HEK293T (cell line): ENCODE measurements at regions of chr22 and their contacts with region 1.

Region 1: GRCh38 chr22:50525390-50526068 is at the start of gene SCO2:
- DNase-seq: peak; percentile 99

Region 2: GRCh38 chr22:50469377-50470305 is 55.9 kb before region 1 on chr22:
- CTCF ChIA-PET with region 1: interaction called, 11 read pairs
- POLR2A ChIA-PET with region 1: interaction called, 6 read pairs
- DNase-seq: no peak

Region 3: DNA sequence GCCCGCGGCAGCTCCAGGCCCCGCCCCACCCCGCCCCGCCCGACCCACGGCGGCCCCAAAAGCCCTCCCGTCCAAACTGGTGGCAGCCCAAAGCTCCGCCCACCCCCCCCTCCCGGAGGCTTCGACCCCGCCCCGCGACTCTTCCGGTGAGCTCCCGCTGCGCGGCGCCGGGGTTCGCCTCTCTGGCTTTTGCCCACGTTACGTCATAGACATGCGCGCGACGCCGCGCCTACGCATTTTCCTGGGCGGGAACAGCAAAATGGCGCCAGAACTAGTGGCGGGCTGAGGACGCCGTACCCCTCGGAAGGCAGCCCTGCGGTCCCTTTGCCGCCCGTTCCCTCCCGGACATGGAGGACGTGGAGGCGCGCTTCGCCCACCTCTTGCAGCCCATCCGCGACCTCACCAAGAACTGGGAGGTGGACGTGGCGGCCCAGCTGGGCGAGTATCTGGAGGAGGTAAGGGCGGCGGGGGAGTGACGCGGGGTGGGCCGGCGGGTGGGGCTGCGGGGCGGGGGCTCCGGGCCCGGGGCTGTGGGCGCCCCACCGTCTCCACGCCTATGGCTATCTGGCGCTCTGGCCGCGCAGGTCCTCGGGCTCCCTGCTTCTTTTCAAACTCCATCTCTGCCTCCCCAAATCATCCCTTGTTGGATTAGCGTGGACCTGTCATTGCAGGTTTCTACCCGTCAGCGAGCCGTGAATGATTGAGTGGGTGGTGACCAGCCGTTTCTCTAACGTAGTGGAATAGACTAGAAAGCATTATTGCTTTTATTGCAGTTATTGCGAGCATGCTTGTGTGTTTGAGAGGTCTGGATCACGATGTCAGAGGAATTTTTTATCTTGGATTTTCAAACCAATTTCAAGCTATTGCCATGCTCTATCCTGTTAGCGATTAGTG is 17.3 kb before region 1 on chr22 and contains the start of gene NCAPH2:
- CTCF ChIA-PET with region 1: interaction called, 11 read pairs
- POLR2A ChIA-PET with region 1: interaction called, 193 read pairs
- DNase-seq: peak; percentile 100

Region 4: GRCh38 chr22:50544078-50544745 is 18.7 kb after region 1 on chr22:
- CTCF ChIA-PET with region 1: interaction called, 11 read pairs
- POLR2A ChIA-PET with region 1: interaction called, 49 read pairs
- DNase-seq: peak; percentile 91

Region 5: GRCh38 chr22:50562523-50563412 is 37.2 kb after region 1 on chr22 and contains the start of gene SYCE3:
- CTCF ChIA-PET with region 1: interaction called, 6 read pairs
- POLR2A ChIA-PET with region 1: interaction called, 59 read pairs
- DNase-seq: peak; percentile 98

Region 6: GRCh38 chr22:50582562-50583293 is 57.2 kb after region 1 on chr22 and contains the start of gene CHKB:
- CTCF ChIA-PET with region 1: interaction called, 3 read pairs
- POLR2A ChIA-PET with region 1: interaction called, 10 read pairs
- DNase-seq: peak; percentile 100